ENCODE measurements at regions of chr13 and their contacts with region 1.

Region 1: DNA sequence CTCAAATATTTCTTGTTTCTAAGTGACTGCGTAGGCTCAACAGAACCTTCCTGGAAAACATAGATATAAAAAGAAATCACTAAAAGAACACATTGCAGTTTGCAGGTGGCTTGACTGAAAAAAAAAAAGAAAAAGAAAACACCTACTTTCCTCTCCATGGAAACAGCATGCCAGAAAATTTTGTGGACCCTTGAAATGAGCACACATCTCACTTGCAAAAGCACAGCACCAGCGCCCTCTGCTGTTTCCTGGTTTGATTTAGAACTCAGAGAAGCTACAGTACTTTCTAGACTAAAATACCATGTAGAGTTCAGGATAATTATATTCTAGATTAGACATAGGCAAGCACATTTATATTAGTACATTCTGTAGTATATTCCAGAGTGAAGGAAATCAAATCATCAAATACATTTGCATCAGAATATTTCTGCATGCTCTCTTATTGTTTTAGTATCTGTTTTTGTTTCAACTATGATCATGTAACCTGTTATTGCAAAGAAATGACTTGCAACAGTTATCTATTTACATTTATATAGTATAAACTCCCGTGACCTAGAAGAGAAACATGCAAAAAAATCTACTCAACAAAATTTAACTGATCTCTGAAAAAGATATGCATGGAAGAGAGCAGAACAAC is 22.3 kb upstream of the XPO4 start:
- DNase-seq: peak; percentile 68
- ATAC-seq: no peak
- H3K4me3 ChIP-seq: no peak overlapping the region
- H3K4me3 Mint-ChIP-seq: no peak overlapping the region
- H3K27ac ChIP-seq: no peak overlapping the region
- H3K27ac Mint-ChIP-seq: no peak overlapping the region
- H3K4me1 ChIP-seq: no peaks in the 10 kb centered on the region
- H3K4me1 Mint-ChIP-seq: no peaks in the 10 kb centered on the region
- H3K27me3 ChIP-seq: no peaks in the 10 kb centered on the region
- H3K27me3 Mint-ChIP-seq: no peaks in the 10 kb centered on the region
- CTCF ChIP-seq: peak; percentile 90

Region 2: DNA sequence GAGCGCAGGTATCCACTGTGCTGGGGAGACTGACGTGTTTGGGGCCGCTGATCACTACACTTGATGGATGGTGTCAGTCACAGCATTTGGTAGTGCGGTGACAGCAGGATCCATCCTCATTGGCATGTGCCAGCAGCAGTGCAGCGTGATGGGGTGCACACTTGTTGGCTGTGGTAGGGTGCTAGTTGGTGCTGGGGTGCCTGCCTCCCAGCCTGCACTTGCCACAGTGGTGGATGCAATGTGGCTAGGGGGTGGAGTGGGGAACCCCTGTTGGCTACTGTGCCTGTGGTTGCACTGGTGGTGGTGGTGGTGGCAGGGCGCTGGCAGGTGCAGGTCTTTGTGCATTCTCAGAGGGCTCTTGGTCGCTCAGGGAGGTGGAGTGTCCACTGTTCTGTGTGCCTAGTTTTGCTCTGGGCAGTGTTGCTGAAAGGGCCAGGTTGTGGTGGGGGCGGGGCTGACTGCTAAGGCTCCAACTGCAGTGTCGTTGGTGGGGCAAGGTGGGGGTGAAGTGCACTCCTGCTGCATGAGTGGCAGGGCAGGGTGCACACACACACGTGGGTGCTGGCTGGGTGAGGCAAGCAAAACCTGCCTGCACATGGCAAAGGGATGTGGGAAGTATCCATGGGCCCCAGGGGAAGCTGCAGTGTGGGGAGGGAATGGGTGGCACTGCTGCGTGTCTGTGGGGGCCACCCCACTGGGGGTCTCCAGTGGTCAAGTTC is 881.5 kb before region 1 on chr13:
- CTCF ChIA-PET with region 1: no interaction called
- POLR2A ChIA-PET with region 1: no interaction called
- intact Hi-C with region 1: no loop called
- DNase-seq: no peak
- ATAC-seq: no peak
- H3K4me3 ChIP-seq: no peak overlapping the region
- H3K4me3 Mint-ChIP-seq: no peak overlapping the region
- H3K27ac ChIP-seq: no peak overlapping the region
- H3K27ac Mint-ChIP-seq: no peak overlapping the region
- H3K4me1 ChIP-seq: peaks cover 0 to under 1% of the 10 kb centered on the region in 2 donors
- H3K4me1 Mint-ChIP-seq: peaks cover 14% of the 10 kb centered on the region
- H3K27me3 ChIP-seq: no peaks in the 10 kb centered on the region
- H3K27me3 Mint-ChIP-seq: no peaks in the 10 kb centered on the region
- CTCF ChIP-seq: no peak

Region 3: DNA sequence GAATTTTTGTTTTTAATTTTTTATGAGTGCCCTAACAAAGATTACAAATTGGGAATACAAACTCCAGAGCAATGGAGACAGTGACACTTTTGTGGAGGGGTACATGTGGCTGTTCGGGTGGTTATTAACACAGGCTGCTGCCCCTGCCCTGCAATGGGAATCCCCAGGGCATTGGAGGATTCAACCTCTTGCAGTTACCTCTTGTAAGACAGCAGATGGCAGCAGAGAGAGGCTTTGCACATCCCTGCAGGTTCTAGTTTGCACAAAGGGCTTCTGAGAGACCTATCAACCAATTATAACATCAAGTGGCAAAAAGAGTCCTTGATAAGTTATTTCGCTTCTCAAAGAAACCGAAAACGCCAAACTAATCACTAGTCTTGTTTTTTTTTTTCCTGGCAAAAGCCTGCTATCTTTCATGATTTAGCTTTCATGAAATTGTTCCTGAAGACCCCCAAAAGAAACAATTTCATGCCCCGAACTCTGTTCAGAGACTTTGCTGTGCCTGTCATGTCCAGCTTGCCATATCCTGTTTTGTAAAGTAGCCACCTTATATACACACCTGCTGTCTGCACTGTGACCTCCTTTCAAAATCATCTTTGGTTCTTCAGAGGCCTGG is 742.5 kb before region 1 on chr13:
- CTCF ChIA-PET with region 1: no interaction called
- POLR2A ChIA-PET with region 1: no interaction called
- intact Hi-C with region 1: loop called (anchors 2 kb)
- DNase-seq: peak; percentile 79
- ATAC-seq: peak; percentile 97
- H3K4me3 ChIP-seq: no peak overlapping the region
- H3K4me3 Mint-ChIP-seq: no peak overlapping the region
- H3K27ac ChIP-seq: no peak overlapping the region
- H3K27ac Mint-ChIP-seq: no peak overlapping the region
- H3K4me1 ChIP-seq: peaks cover 0 to 2% of the 10 kb centered on the region in 2 donors
- H3K4me1 Mint-ChIP-seq: no peaks in the 10 kb centered on the region
- H3K27me3 ChIP-seq: peaks cover 0 to 24% (median 15%) of the 10 kb centered on the region in 4 experiments
- H3K27me3 Mint-ChIP-seq: peaks cover 64% of the 10 kb centered on the region
- CTCF ChIP-seq: peak; percentile 91

Region 4: GRCh38 chr13:20197361-20197834 is 727.5 kb before region 1 on chr13:
- CTCF ChIA-PET with region 1: interaction called, 32 read pairs
- POLR2A ChIA-PET with region 1: no interaction called
- intact Hi-C with region 1: no loop called
- DNase-seq: peak; percentile 61
- ATAC-seq: peak; percentile 76
- H3K4me3 ChIP-seq: no peak overlapping the region
- H3K4me3 Mint-ChIP-seq: no peak overlapping the region
- H3K27ac ChIP-seq: no peak overlapping the region
- H3K27ac Mint-ChIP-seq: no peak overlapping the region
- H3K4me1 ChIP-seq: peaks cover 18 to 28% of the 10 kb centered on the region in 2 donors
- H3K4me1 Mint-ChIP-seq: peaks cover 18% of the 10 kb centered on the region
- H3K27me3 ChIP-seq: peaks cover 2 to 44% (median 44%) of the 10 kb centered on the region in 4 experiments
- H3K27me3 Mint-ChIP-seq: peaks cover 60% of the 10 kb centered on the region
- CTCF ChIP-seq: peak; percentile 84

Region 5: DNA sequence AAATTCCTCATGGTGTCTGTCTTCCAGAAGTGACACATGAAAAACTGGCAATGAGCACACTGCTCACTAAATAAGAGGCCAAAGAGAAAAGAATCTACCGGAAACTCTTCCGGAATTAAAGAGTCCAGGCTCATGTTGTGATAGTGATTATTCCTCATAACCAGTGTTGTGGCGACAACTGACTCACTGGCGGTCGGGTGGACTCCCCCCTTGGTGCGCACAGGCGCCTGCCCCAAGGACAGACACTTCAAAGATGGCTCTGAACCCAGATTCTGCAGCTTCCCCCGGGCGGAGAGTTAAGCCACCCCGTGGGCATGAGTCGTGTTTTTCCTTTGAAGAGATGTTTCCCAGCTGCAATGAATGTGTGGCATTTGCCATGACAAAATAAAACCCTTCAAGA is 211.1 kb before region 1 on chr13:
- CTCF ChIA-PET with region 1: interaction called, 13 read pairs
- POLR2A ChIA-PET with region 1: interaction called, 3 read pairs
- intact Hi-C with region 1: loop called (anchors 1 kb)
- DNase-seq: no peak
- ATAC-seq: no peak
- H3K4me3 ChIP-seq: no peak overlapping the region
- H3K4me3 Mint-ChIP-seq: no peak overlapping the region
- H3K27ac ChIP-seq: no peak overlapping the region
- H3K27ac Mint-ChIP-seq: no peak overlapping the region
- H3K4me1 ChIP-seq: peaks cover 0 to 8% of the 10 kb centered on the region in 2 donors
- H3K4me1 Mint-ChIP-seq: peaks cover 7% of the 10 kb centered on the region
- H3K27me3 ChIP-seq: peaks cover 0 to 4% (median 0%) of the 10 kb centered on the region in 4 experiments
- H3K27me3 Mint-ChIP-seq: peaks cover 8% of the 10 kb centered on the region
- CTCF ChIP-seq: no peak

Region 6: DNA sequence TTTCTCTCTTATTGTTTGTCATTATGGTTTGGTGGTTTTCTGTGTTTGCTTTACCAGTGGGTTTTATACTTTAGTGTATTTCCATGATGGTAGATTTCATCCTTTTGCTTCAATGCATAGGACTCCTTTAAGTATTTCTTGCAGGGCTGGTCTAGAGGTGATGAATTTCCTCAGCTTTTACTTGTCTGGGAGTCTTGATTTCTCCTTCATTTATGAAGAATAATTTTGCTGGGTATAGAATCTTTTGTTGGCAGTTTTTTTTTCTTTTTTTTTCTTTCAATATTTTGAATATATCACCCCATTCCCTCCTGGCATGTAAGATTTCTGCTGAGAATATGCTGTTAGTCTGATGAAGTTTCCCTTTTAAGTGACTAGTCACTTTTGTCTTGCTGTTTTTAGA is 170.9 kb before region 1 on chr13:
- CTCF ChIA-PET with region 1: no interaction called
- POLR2A ChIA-PET with region 1: no interaction called
- intact Hi-C with region 1: no loop called
- DNase-seq: no peak
- ATAC-seq: no peak
- H3K4me3 ChIP-seq: no peak overlapping the region
- H3K4me3 Mint-ChIP-seq: no peak overlapping the region
- H3K27ac ChIP-seq: no peak overlapping the region
- H3K27ac Mint-ChIP-seq: no peak overlapping the region
- H3K4me1 ChIP-seq: no peaks in the 10 kb centered on the region
- H3K4me1 Mint-ChIP-seq: no peaks in the 10 kb centered on the region
- H3K27me3 ChIP-seq: no peaks in the 10 kb centered on the region
- H3K27me3 Mint-ChIP-seq: no peaks in the 10 kb centered on the region
- CTCF ChIP-seq: no peak

Region 7: GRCh38 chr13:21297914-21298831 is 373.3 kb after region 1 on chr13:
- CTCF ChIA-PET with region 1: no interaction called
- POLR2A ChIA-PET with region 1: no interaction called
- intact Hi-C with region 1: no loop called
- DNase-seq: peak; percentile 93
- ATAC-seq: peak; percentile 96
- H3K4me3 ChIP-seq: peak overlapping the region; percentile 8 to 88 (median 75)
- H3K4me3 Mint-ChIP-seq: peak overlapping the region; percentile 89
- H3K27ac ChIP-seq: peak overlapping the region; percentile 7 to 77
- H3K27ac Mint-ChIP-seq: peak overlapping the region; percentile 89
- H3K4me1 ChIP-seq: peaks cover 15 to 18% of the 10 kb centered on the region in 2 donors
- H3K4me1 Mint-ChIP-seq: peaks cover 17% of the 10 kb centered on the region
- H3K27me3 ChIP-seq: no peaks in the 10 kb centered on the region
- H3K27me3 Mint-ChIP-seq: no peaks in the 10 kb centered on the region
- CTCF ChIP-seq: peak; percentile 93

Measured in B cell (primary cell).